ENCODE measurements at regions of chr9 and their contacts with region 1.

Region 1: DNA sequence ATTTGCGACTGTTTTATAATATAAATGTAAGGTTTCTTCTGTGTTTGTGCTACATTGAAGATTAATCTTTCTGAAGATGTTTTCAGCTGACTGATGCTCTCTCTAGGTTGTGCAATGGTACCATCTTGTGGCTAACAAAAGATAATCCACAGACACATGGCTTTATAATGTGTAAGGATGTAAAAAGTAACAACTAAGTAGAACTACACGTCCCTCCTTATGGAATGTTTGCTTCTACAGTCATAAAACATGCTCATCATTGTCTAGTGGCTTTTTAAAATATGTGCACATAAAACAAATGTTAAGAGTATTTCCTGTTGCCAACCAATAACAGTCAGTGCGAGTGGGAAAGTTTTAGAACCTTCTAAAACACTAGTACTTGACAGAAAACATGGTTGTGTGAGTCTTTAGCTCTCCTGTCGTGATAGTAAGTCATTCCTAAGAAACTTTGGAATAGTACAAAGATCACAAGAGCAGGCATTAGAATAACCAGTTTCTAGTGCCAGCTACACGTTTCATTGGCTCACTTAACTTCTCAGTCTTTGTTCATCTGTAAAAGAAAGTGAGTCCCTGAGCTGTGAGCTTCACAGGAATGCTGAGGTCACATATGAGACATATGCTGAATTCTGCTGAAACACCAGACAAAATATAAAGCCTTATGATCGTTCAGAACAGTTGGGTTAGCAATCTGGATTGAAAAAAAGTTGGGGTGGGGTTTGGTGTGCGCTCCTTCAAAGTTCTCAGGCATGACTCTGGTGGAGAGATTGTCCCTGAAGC is 75.7 kb upstream of the GLIS3 start:
- DNase-seq: no peak
- ATAC-seq: no peak

Region 2: DNA sequence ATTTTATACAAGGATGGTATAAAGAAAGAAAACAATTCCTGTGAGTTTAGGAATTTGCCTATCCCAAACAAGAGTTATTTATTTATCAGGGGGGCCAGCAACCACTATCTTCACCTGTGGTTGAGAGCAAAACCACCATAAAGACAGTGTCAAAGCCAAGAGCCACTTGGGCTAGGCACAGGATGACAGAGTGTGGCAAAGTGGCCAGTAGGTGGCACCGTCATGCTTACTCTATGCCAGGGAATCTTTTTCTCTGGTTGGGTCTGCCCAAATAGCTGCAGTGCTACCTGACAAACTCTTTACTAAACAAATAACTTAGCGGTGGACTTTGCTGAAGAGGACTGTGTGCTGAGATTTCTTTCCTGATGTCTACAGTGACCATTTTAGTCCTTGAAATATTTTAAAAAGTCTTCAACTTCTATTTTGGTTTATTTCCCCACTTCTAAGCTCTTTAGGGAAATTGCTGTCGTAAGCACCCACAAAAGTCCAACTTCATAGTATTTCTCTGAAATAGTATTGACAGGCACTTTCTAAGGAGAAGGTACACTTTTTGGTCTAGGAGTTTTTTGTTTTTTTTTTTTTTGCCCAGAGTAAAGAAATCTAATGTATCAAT is 1134.8 kb before region 1 on chr9:
- intact Hi-C with region 1: loop called (anchors 5 kb)
- DNase-seq: peak; percentile 81
- ATAC-seq: peak; percentile 79

Measured in Right ventricle myocardium inferior (tissue), 1 donor.